ENCODE measurements at regions of chr12 and their contacts with region 1.

Region 1: GRCh38 chr12:56359851-56360767 is at the start of gene STAT2:
- DNase-seq: peak; percentile 100
- H3K4me3 ChIP-seq: peak within 1 kb of the TSS; percentile 98
- H3K27ac ChIP-seq: peak within 1 kb of the TSS; percentile 94
- H3K27me3 ChIP-seq: no peaks in the 10 kb centered on the region
- CTCF ChIP-seq: no peak
- polyA plus RNA-seq, gene STAT2: 179 and 193 TPM in 2 replicates

Region 2: GRCh38 chr12:56315622-56316473 is 44.3 kb before region 1 on chr12 and contains the start of gene CNPY2:
- CTCF ChIA-PET with region 1: interaction called, 3 read pairs
- POLR2A ChIA-PET with region 1: interaction called, 21 read pairs
- DNase-seq: peak; percentile 88
- H3K4me3 ChIP-seq: peak within 1 kb of the TSS; percentile 96
- H3K27ac ChIP-seq: peak within 1 kb of the TSS; percentile 92
- H3K27me3 ChIP-seq: no peaks in the 10 kb centered on the region
- CTCF ChIP-seq: no peak
- polyA plus RNA-seq, gene CNPY2: 186 and 194 TPM in 2 replicates

Region 3: GRCh38 chr12:56341616-56342015 is 18.5 kb before region 1 on chr12:
- CTCF ChIA-PET with region 1: no interaction called
- POLR2A ChIA-PET with region 1: interaction called, 10 read pairs
- DNase-seq: no peak
- H3K4me3 ChIP-seq: no peak overlapping the region
- H3K27ac ChIP-seq: no peak overlapping the region
- H3K27me3 ChIP-seq: no peaks in the 10 kb centered on the region
- CTCF ChIP-seq: no peak

Region 4: DNA sequence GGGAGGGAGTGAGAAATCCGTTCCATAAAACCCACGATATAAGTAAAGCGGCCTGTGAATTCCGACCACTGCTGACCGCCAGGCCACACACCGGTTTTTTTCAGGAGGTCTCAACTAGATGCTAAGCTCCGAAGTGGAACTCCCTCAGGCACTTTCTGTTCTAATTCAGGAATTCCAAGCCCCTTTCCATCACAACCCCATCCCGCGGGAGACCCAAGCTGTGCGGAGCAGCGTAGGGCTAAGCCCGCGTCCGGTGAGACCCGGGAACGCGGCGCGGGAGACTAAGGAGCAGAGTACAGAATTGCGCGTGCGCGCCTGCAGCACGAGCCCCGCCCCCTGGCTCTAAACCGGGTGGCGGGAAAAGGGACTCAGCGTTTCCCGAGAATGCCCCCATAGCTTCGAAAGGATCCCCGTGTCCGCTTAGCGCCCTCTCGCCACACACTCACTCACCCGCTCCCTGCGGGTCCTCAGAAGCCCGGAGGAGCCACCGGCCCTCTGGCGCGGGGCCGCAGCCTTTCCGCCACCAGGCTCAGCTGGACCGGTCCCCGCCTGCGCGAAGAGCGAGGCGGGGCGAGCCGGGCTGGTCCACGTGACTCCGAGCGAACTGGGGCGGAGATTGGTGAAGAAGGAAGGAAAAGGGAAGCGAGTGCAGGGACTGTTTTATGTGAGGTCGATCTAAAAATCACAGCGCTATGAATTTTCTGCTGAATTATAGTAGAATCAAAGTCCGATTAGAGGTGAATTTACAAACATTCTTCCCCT is 88.9 kb after region 1 on chr12 and contains the start of gene TIMELESS:
- CTCF ChIA-PET with region 1: interaction called, 3 read pairs
- POLR2A ChIA-PET with region 1: interaction called, 18 read pairs
- DNase-seq: peak; percentile 51
- H3K4me3 ChIP-seq: peak within 1 kb of the TSS; percentile 83
- H3K27ac ChIP-seq: peak within 1 kb of the TSS; percentile 68
- H3K27me3 ChIP-seq: peaks cover 8% of the 10 kb centered on the region
- CTCF ChIP-seq: peak; percentile 12; the same call in 1 of the 2 replicates
- polyA plus RNA-seq, gene TIMELESS: 2.0 and 3.3 TPM in 2 replicates

Region 5: DNA sequence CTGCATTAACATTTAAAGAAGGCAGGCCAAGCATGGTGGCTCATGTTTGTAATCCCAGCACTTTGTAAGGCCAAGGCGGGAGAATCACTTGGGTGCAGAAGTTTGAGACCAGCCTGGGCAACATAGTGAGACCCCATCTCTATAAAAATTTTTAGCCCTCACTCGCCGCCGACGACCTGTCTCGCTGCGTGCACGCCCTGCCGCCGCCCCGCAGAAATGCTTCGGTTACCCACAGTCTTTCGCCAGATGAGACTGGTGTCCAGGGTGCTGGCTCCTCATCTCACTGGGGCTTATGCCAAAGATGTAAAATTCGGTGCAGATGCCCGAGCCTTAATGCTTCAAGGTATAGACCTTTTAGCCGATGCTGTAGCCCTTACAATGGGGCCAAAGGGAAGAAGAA is 150.7 kb after region 1 on chr12:
- CTCF ChIA-PET with region 1: no interaction called
- POLR2A ChIA-PET with region 1: no interaction called
- DNase-seq: no peak
- H3K4me3 ChIP-seq: no peak overlapping the region
- H3K27ac ChIP-seq: no peak overlapping the region
- H3K27me3 ChIP-seq: peaks cover 2% of the 10 kb centered on the region
- CTCF ChIP-seq: no peak

Measured in AG04450 (cell line).